Activated B cell treated with CpG ODN at 0.5 μM for 24 hours (primary cell): ENCODE measurements at regions of chr7 and their contacts with region 1.

Region 1: GRCh38 chr7:18221377-18222293 is 194.0 kb upstream of the PRPS1L1 start:
- DNase-seq: no peak
- ATAC-seq: no peak
- H3K4me3 Mint-ChIP-seq: no peak overlapping the region
- H3K27ac Mint-ChIP-seq: peak overlapping the region; percentile 12
- H3K4me1 Mint-ChIP-seq: peaks cover 56% of the 10 kb centered on the region
- H3K27me3 Mint-ChIP-seq: no peaks in the 10 kb centered on the region
- CTCF ChIP-seq: no peak

Region 2: DNA sequence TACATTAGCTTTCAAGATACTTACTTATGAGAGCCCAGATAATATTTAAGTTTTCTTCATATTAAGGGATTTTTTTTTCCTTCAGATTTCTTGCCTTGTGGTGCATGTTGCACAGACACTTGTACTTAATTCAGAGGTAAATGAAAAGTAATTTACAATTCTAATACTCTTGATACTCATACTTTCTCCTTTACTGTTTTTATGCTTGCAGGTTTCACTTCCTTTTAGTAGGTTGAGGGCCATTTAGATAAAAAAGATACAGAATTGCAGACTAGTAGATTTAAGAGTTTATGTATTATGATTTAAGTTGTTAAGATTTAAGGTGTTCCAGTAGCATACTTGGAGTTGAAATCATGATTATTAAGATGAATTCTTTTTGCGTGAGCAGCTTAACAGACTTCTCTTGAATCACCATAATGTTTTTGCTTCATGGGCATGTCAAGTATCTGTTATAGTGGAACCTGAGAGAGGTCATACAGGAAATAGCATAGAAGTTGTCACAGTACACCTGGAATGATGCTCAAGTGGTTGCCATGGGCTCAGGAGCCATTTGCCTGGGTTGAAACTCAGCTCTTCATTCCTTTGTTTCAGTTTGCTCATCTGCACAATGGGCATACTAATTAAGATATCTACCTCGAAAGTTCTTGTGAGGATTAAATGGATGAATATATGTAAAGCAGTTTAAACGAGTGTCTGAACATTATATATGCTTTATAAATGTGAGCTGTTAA is 19.2 kb before region 1 on chr7:
- CTCF ChIA-PET with region 1: no interaction called
- POLR2A ChIA-PET with region 1: no interaction called
- intact Hi-C with region 1: loop called (anchors 2 kb)
- DNase-seq: no peak
- ATAC-seq: peak; percentile 57
- H3K4me3 Mint-ChIP-seq: no peak overlapping the region
- H3K27ac Mint-ChIP-seq: peak overlapping the region; percentile 59
- H3K4me1 Mint-ChIP-seq: peaks cover 20% of the 10 kb centered on the region
- H3K27me3 Mint-ChIP-seq: no peaks in the 10 kb centered on the region
- CTCF ChIP-seq: no peak

Region 3: DNA sequence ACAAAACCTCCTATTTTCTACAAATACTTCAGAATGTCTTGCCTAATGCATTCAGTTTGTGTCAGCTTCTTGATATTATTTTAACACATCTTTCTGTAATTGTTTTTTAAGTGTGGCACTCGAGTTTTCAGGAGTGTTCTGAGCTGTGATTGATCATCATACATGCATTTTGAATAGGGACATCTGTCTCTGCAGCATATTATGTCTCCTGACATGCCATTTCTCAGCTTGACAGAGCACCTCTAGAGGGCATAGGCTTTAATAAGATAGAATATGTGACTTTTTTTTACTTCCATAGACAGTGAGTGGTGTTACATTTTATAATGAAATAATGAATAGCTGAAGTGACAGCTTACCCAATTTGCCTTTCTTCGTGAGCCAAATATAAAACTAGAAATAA is 54.7 kb after region 1 on chr7:
- CTCF ChIA-PET with region 1: no interaction called
- POLR2A ChIA-PET with region 1: no interaction called
- intact Hi-C with region 1: loop called (anchors 5 kb)
- DNase-seq: no peak
- ATAC-seq: no peak
- H3K4me3 Mint-ChIP-seq: no peak overlapping the region
- H3K27ac Mint-ChIP-seq: no peak overlapping the region
- H3K4me1 Mint-ChIP-seq: no peaks in the 10 kb centered on the region
- H3K27me3 Mint-ChIP-seq: no peaks in the 10 kb centered on the region
- CTCF ChIP-seq: no peak

Region 4: DNA sequence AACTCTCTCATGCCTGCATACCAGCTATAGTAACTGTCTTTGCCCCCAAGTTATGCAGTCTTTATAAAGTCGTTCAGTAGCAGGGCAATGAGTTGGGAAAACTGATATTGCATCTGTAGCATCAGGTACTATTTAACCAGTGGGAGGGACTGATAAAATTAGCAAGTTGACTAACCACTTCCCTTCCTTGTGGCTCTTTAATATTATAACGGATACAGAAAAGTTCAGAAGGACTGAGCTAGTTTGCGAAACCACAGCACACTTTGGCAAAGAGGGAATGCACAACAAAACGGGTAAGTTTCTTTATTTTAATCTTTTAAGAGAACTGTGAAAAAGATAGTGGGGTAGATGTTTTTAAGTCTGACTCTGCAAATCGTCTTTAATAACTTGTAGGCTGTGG is 68.6 kb after region 1 on chr7:
- CTCF ChIA-PET with region 1: interaction called, 5 read pairs
- POLR2A ChIA-PET with region 1: interaction called, 3 read pairs
- intact Hi-C with region 1: loop called (anchors 2 kb)
- DNase-seq: no peak
- ATAC-seq: peak; percentile 55
- H3K4me3 Mint-ChIP-seq: peak overlapping the region; percentile 83
- H3K27ac Mint-ChIP-seq: peak overlapping the region; percentile 86
- H3K4me1 Mint-ChIP-seq: peaks cover 63% of the 10 kb centered on the region
- H3K27me3 Mint-ChIP-seq: no peaks in the 10 kb centered on the region
- CTCF ChIP-seq: no peak

Region 5: GRCh38 chr7:19051767-19052375 is 830.2 kb after region 1 on chr7:
- CTCF ChIA-PET with region 1: no interaction called
- POLR2A ChIA-PET with region 1: no interaction called
- intact Hi-C with region 1: loop called (anchors 10 kb)
- DNase-seq: no peak
- ATAC-seq: peak; percentile 66
- H3K4me3 Mint-ChIP-seq: no peak overlapping the region
- H3K27ac Mint-ChIP-seq: no peak overlapping the region
- H3K4me1 Mint-ChIP-seq: no peaks in the 10 kb centered on the region
- H3K27me3 Mint-ChIP-seq: no peaks in the 10 kb centered on the region
- CTCF ChIP-seq: peak; percentile 39

Region 6: GRCh38 chr7:19215412-19215811 is 993.8 kb after region 1 on chr7:
- CTCF ChIA-PET with region 1: no interaction called
- POLR2A ChIA-PET with region 1: no interaction called
- intact Hi-C with region 1: no loop called
- DNase-seq: no peak
- ATAC-seq: no peak
- H3K4me3 Mint-ChIP-seq: no peak overlapping the region
- H3K27ac Mint-ChIP-seq: no peak overlapping the region
- H3K4me1 Mint-ChIP-seq: no peaks in the 10 kb centered on the region
- H3K27me3 Mint-ChIP-seq: no peaks in the 10 kb centered on the region
- CTCF ChIP-seq: no peak